IMR-90 (cell line): ENCODE measurements at regions of chr3 and their contacts with region 1.

Region 1: DNA sequence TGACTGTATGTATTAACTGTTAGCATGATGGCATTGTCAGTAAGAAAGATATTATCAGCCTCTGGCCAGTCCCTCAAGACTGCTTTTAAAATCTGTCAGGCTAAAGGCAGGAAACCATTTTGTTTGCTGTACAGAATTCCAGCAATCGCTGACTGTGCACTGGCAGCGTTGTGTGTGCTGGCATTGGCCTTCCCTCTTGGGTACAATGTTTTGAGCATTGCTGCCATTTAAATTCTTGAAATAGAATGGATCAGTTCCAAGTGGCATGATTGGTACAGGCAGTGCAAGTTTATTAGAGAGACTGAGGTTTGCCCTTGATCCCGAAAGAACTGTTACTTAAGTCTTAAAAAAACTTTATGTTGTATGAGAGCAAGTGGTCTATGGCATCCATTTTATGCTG is 788.7 kb downstream of the OTOL1 start:
- DNase-seq: no peak
- ATAC-seq: no peak; the same call in 1 of the 2 replicates
- H3K4me3 ChIP-seq: no peak overlapping the region
- H3K27ac ChIP-seq: no peak overlapping the region
- H3K4me1 ChIP-seq: peaks cover 8% of the 10 kb centered on the region
- H3K27me3 ChIP-seq: no peaks in the 10 kb centered on the region
- CTCF ChIP-seq: no peak
- POLR2A ChIP-seq: no peak
- RAD21 ChIP-seq: no peak

Region 2: DNA sequence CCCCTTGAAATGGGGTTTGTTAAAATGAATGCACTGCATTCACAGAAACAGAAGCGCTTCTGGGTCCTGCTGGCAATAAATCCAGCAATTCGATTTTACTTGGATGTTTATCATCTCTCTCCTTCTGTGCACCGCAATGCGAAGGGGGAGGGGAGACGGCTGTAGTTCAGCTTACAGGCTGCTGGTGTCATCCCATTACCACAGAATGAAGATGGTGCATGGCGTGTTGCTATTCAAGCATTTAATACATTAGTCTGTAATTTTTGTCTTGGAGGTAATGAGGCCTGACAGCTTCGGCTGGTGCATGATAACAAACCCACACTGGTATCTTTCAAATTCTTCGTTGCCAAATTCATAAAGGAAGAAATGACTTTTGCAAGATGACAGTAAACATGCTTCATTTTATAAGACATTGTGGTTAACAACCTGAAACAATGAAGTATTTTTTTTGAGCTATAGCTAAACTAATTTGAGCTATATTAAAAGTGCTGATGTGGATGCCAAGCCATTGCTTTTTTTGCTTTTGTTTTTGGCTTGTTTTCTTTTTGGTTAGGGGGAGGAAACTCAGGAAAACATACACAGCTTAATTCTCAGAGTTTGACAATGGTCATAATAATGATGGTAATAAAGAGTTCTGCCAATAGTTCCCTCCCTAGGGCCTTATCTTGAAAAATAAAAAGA is 370.4 kb before region 1 on chr3:
- CTCF ChIA-PET with region 1: interaction called, 3 read pairs
- POLR2A ChIA-PET with region 1: no interaction called
- dilution Hi-C with region 1: no loop called
- in situ Hi-C with region 1: no loop called
- intact Hi-C with region 1: loop called (anchors 10 kb)
- DNase-seq: peak; percentile 59
- ATAC-seq: peak; percentile 94
- H3K4me3 ChIP-seq: no peak overlapping the region
- H3K27ac ChIP-seq: no peak overlapping the region
- H3K4me1 ChIP-seq: peaks cover 2% of the 10 kb centered on the region; the same call in 1 of the 2 replicates
- H3K27me3 ChIP-seq: no peaks in the 10 kb centered on the region
- CTCF ChIP-seq: peak; percentile 66
- POLR2A ChIP-seq: no peak
- RAD21 ChIP-seq: peak; percentile 78

Region 3: DNA sequence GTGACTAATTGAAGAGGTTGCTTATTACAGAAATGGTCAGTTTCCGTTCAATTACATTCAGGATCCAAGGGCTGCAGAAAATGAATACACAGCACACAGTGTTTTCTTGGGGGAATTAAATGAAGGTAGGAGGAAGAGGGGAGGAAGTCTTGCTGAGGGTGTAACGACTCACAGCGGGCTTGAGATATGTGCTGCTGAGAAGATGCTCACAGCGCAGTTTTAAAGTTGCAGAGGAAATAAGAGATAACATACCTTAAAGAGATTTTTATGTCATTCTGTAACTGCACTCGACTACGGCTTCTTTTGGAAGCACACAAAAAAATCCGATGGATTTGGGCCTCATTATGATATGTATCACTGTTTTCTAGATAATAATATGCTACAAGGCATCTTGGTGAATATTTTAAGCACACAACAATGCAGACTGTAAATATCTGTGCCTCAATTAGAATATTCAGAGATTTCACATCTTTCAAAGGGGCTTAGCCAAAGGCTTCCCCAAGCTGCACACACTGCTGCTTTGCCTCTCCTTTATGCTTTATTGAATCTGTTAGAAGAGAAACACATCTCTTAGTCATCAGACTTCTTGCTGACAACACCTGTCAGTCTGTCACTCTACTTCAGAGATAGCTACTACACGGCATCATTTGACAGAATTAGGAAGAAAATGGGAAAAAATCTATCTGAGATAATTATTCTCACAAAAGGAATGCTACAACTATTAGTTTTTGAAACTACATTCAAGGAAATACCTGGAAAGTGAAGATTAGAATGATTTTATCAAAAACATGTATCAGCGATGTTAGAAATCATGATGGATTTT is 15.4 kb before region 1 on chr3:
- CTCF ChIA-PET with region 1: no interaction called
- POLR2A ChIA-PET with region 1: no interaction called
- dilution Hi-C with region 1: no loop called
- in situ Hi-C with region 1: no loop called
- intact Hi-C with region 1: no loop called
- DNase-seq: no peak
- ATAC-seq: no peak
- H3K4me3 ChIP-seq: no peak overlapping the region
- H3K27ac ChIP-seq: no peak overlapping the region
- H3K4me1 ChIP-seq: no peaks in the 10 kb centered on the region
- H3K27me3 ChIP-seq: no peaks in the 10 kb centered on the region
- CTCF ChIP-seq: no peak
- POLR2A ChIP-seq: no peak
- RAD21 ChIP-seq: no peak

Region 4: DNA sequence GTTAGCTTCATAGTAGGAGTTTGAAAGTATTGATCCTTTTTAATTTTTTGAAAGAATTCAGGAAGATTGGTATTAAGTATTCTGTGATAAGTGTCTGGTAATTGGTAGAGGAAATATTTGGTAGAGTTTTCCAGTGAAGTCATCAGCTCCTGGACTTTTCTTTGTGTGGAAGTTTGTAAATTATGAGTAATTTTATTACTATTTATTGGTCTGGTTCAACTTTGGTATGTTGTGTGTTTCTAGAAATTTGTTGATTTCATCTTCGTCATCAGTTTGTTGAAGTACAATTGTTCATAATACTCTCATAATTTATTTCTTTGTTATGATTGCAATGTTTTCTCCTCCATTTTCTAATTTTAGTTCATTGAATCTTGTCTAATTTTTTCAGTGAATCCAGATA is 43.4 kb after region 1 on chr3:
- CTCF ChIA-PET with region 1: no interaction called
- POLR2A ChIA-PET with region 1: no interaction called
- dilution Hi-C with region 1: no loop called
- in situ Hi-C with region 1: no loop called
- intact Hi-C with region 1: no loop called
- DNase-seq: no peak
- ATAC-seq: no peak
- H3K4me3 ChIP-seq: no peak overlapping the region
- H3K27ac ChIP-seq: no peak overlapping the region
- H3K4me1 ChIP-seq: no peaks in the 10 kb centered on the region
- H3K27me3 ChIP-seq: no peaks in the 10 kb centered on the region
- CTCF ChIP-seq: no peak
- POLR2A ChIP-seq: no peak
- RAD21 ChIP-seq: no peak

Region 5: DNA sequence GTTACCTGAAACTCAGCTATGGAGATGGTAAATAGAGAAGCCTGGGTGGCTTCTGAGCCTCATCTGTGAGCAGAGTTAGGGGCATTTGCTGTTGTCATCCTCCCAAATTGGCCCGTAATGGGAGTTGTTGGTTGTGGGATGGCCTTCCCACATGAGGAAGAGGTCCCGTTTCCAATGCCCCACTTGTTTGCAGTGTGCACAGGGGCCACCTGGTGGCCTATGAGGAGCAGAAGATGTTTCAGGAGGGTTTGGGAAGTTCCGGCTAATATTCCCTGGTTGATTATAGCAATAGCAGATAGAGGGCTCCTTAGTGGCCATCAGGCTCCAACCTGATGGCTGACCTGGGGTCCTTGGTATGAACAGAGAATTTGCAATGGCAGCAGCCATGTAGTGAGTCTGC is 757.8 kb after region 1 on chr3:
- CTCF ChIA-PET with region 1: no interaction called
- POLR2A ChIA-PET with region 1: no interaction called
- dilution Hi-C with region 1: no loop called
- in situ Hi-C with region 1: no loop called
- intact Hi-C with region 1: loop called (anchors 5 kb)
- DNase-seq: peak; percentile 19
- ATAC-seq: 0 out of 2 replicates have a peak, but pooled peaks have one; percentile 29
- H3K4me3 ChIP-seq: no peak overlapping the region
- H3K27ac ChIP-seq: no peak overlapping the region
- H3K4me1 ChIP-seq: no peaks in the 10 kb centered on the region
- H3K27me3 ChIP-seq: no peaks in the 10 kb centered on the region
- CTCF ChIP-seq: 0 out of 2 replicates have a peak, but pooled peaks have one; percentile 24
- POLR2A ChIP-seq: no peak
- RAD21 ChIP-seq: peak; percentile 32; the same call in 1 of the 2 replicates